H1 (cell line): ENCODE measurements at regions of chr15 and their contacts with region 1.

Region 1: DNA sequence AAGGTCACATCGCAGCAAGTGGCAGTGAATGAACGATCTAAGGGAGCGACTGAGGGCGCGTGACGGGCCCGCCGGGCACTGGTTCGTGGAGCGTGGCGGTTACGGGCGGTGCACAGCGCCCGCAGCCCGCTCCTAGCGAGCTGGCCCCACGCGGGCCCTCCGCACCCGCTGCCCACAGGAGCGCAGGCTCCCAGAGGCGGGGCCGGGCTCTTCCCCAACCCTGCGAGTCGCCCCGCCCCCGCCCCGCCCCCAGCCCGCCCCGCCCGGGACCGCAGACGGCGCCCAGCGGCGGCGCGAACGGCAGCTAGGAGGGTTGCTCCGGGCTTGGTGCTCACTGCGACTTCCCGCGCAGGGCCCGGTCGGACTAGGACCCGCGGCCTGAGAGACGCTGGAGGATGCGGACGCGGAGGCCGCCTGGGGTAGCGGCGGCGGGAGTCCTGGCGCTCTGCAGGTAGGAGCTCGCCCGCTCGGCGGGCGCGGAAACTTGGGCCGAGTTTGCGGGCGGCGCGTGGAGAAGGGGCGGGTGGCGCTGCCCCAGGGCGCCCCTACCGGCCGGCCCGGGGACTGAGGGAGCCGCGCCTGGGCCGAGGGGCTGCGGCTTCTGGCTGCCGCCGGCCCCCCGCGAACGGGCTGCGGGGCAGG is at the start of gene C15orf39:
- DNase-seq: peak in 1 of 2 experiments; percentile 89
- H3K4me3 ChIP-seq: peak within 1 kb of the TSS; percentile 70 to 89 (median 82)
- H3K27ac ChIP-seq: peak within 1 kb of the TSS; percentile 79; the same call in 1 of the 2 replicates
- H3K4me1 ChIP-seq: peaks cover 0 to 38% (median 20%) of the 10 kb centered on the region in 4 experiments; a peak in 6 of 7 replicates
- H3K27me3 ChIP-seq: peaks cover 0 to 6% (median 2%) of the 10 kb centered on the region in 4 experiments; a peak in 1 of 7 replicates
- CTCF ChIP-seq: peak in 2 of 3 experiments; percentile 73 to 79; a peak in 3 of 4 replicates
- EP300 ChIP-seq: no peak
- POLR2A ChIP-seq: peak in 1 of 2 experiments; percentile 90; a peak in 2 of 3 replicates
- RAD21 ChIP-seq: peak; percentile 17 to 67; a peak in 3 of 4 replicates
- total RNA-seq, gene C15orf39: 35.6 and 38.5 TPM in 2 replicates

Region 2: DNA sequence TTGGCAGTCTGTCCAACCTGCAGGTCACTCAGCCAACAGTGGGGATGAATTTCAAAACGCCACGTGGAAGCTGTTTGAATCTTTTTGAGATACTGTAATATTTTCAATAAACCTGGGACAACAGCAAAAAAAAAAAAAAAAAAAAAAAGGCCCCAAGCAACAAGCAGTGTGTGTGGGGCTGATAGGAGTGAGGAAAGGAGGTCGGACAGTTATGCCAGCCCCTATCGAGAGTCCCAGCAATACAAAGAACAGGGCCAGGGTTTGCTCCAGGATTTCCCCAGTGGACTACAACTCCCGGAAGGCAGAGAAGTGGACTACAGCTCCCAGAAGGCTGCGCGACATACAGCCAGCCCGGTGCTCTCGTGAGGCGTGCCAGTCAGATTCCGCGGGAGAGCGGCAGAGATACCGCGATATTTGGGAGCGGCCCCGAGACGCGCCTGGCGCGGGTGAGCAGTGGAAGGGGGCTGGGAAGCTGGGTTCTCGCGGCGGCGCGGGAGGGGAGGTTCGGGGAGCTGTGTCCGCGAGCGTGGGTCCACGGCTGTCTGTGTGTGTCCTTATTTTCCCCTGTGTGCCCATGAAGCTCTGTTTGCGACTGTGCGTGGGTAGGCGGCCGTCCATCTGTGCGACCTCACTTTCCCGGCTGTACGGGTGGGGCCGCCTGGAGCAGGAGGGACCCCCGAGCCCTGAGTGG is 178.4 kb before region 1 on chr15 and contains the start of gene PPCDC:
- CTCF ChIA-PET with region 1: interaction called, 97 read pairs
- POLR2A ChIA-PET with region 1: interaction called, 22 read pairs
- DNase-seq: peak; percentile 77 to 95
- H3K4me3 ChIP-seq: peak within 1 kb of the TSS; percentile 87 to 99 (median 90)
- H3K27ac ChIP-seq: peak within 1 kb of the TSS; percentile 90
- H3K4me1 ChIP-seq: no peaks in the 10 kb centered on the region; a peak in 1 of 7 replicates
- H3K27me3 ChIP-seq: no peaks in the 10 kb centered on the region
- CTCF ChIP-seq: no peak
- EP300 ChIP-seq: no peak
- POLR2A ChIP-seq: peak; percentile 95 to 99
- RAD21 ChIP-seq: peak in 1 of 2 experiments; percentile 7; a peak in 1 of 4 replicates
- total RNA-seq, gene PPCDC: 11.3 and 14.7 TPM in 2 replicates

Region 3: DNA sequence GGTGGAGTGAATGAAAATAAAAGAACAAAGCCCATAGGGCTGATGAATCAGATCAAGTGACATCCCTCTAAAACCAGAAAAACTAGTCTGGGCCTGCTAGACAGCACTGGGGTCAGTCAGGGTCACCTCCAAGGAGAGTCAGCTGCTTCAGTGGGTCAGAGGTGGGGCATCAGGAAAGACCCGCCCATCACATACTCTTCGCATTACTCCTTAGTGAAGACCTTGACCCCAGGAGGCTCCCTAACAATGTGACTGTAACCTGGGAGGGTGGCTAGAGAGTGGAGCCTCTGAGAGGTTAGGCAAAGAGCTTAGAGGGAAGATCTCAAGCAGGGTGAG is 165.4 kb before region 1 on chr15:
- CTCF ChIA-PET with region 1: interaction called, 97 read pairs
- POLR2A ChIA-PET with region 1: interaction called, 7 read pairs
- DNase-seq: peak; percentile 64 to 71
- H3K4me3 ChIP-seq: no peak overlapping the region
- H3K27ac ChIP-seq: no peak overlapping the region
- H3K4me1 ChIP-seq: peaks cover 3 to 7% (median 3%) of the 10 kb centered on the region in 4 experiments; a peak in 6 of 7 replicates
- H3K27me3 ChIP-seq: no peaks in the 10 kb centered on the region
- CTCF ChIP-seq: no peak
- EP300 ChIP-seq: peak in 1 of 2 experiments; percentile 60; a peak in 1 of 3 replicates
- POLR2A ChIP-seq: no peak
- RAD21 ChIP-seq: peak in 1 of 2 experiments; percentile 25; a peak in 2 of 4 replicates

Region 4: GRCh38 chr15:75156326-75157215 is 45.2 kb before region 1 on chr15:
- CTCF ChIA-PET with region 1: interaction called, 15 read pairs
- POLR2A ChIA-PET with region 1: interaction called, 3 read pairs
- DNase-seq: peak; percentile 33 to 61
- H3K4me3 ChIP-seq: no peak overlapping the region
- H3K27ac ChIP-seq: no peak overlapping the region
- H3K4me1 ChIP-seq: peaks cover 0 to 11% (median 6%) of the 10 kb centered on the region in 4 experiments; a peak in 6 of 7 replicates
- H3K27me3 ChIP-seq: no peaks in the 10 kb centered on the region
- CTCF ChIP-seq: no peak
- EP300 ChIP-seq: no peak
- POLR2A ChIP-seq: no peak
- RAD21 ChIP-seq: no peak

Region 5: DNA sequence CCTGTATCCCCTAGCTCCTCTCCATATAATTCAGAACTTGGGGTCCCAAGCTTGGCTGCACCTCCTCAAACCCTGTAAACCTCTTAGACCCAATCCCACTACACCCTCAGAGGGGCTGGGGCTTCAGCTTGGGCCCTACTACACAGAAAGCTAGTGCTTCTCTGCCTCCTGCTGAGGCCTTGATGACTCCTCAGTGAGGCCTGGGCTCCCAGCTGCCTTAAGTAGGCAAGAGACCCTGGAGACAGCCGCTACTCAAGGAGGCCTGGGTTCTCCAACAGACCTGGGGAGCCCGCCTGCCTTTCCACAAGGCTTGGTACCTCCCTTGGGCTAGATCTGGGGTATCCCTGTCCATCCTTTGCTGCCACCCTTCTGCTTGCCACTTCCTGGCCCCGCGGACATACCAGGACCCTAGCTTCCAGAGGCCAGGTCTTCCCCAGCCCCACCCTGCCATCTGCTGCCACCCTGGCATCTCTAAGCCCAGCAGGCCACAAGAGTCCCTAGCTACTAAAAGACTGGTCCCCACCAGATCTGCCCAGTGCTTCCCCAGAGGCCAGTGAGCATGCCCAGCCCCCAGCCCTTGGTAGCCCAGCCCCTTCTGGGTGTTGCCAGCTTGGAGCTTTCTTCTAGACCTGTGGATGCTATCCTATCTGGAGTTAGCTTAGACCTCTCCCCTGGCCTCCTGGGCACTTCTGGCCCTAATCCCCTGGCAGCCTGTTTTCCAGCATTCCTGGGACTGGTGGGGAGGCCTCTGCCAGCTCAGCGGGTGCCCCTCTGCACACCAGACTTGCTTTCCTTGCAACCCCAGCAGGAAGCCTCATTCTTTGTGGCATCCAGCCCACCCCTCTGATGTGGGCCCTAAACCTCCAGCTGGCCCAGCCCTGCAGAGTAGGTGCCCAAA is 13.6 kb after region 1 on chr15:
- CTCF ChIA-PET with region 1: interaction called, 11 read pairs
- POLR2A ChIA-PET with region 1: interaction called, 8 read pairs
- DNase-seq: peak in 1 of 2 experiments; percentile 58
- H3K4me3 ChIP-seq: no peak overlapping the region
- H3K27ac ChIP-seq: no peak overlapping the region
- H3K4me1 ChIP-seq: peaks cover 0 to 17% (median 3%) of the 10 kb centered on the region in 4 experiments; a peak in 4 of 7 replicates
- H3K27me3 ChIP-seq: peaks cover 0 to 3% (median 0%) of the 10 kb centered on the region in 4 experiments; a peak in 1 of 7 replicates
- CTCF ChIP-seq: no peak
- EP300 ChIP-seq: no peak
- POLR2A ChIP-seq: no peak
- RAD21 ChIP-seq: no peak

Region 6: DNA sequence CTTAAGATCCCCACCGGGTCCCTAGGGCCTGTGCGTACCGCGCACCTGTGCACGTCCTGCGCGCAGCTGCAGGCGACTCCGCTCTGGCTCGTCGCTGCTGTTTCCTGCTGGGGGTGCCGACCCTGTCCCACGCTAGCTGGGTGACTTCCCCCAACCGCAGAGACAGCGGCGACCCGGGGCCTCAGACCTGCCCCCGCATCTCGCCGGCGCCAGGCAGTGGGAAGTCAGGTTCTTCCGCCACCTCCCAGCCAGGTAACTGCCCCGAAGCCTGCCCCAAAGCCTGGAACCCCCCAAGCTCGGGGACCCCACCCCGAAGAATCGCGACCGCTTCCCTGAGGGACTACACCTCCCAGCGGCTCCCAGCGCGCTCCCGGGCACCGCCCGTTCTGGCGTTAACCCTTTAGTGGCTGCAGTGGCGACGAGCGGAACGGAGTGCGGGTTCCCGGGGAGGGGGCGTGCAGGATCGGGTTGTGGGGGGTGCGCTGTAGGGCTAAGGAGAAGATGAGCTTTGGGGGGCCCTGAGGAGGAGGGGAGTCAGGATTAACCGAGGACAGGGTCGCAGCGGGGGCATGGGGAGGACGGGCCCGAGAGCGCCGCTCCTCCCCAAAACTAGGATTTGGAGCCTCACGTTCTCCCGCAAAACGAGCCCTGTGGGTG is 145.6 kb after region 1 on chr15:
- CTCF ChIA-PET with region 1: no interaction called
- POLR2A ChIA-PET with region 1: no interaction called
- DNase-seq: peak in 1 of 2 experiments; percentile 87
- H3K4me3 ChIP-seq: peak overlapping the region; percentile 63 to 87 (median 76)
- H3K27ac ChIP-seq: no peak overlapping the region
- H3K4me1 ChIP-seq: peaks cover 0 to 9% (median 5%) of the 10 kb centered on the region in 4 experiments; a peak in 4 of 7 replicates
- H3K27me3 ChIP-seq: peaks cover 0 to 31% (median 16%) of the 10 kb centered on the region in 4 experiments; a peak in 5 of 7 replicates
- CTCF ChIP-seq: no peak
- EP300 ChIP-seq: no peak
- POLR2A ChIP-seq: no peak
- RAD21 ChIP-seq: no peak